Keratinocyte (primary cell): ENCODE measurements at regions of chr2 and their contacts with region 1.

Region 1: DNA sequence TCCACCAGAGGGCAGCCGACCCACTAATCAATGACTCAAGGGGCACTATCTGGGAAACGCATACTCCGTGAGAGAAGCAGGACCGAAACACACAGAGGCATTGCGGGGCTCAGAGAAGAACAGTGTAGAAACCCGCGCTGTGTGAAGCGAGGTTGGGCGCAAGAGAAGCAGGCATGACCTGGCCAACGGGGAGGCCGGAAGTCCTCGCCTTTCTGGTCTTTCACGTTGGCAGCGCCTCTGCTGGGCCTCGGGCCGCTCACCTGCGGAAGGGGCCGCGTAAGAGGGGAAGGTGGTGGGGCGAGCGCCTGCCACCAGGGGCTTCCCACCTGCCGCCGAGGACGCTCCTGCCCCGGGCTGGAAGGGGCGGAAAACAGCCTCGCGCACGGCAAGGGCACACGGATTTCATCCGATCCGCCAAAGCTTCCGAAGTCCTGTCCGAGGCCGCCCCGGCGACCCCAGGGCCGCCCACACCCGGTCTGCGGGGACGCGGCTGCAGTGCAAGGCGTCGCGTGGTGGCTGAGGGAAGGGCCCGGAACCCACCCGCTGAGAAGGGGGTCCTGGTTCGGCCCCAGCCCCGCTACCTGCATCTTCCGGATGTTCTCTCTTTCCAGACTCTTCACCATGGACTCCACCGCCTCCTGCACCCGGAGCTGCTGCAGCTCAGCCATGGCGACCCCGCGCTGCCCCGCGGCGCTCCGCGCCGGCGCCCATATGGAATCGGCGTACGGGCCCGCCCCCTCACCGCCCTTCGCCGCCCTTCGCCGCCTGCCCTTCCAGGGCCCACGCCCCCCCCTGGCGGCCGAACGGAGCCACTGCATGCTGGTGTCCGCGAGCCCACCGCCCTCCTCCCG is at the start of gene FAM136A:
- DNase-seq: no peak
- H3K4me3 ChIP-seq: peak within 1 kb of the TSS; percentile 82 to 91 (median 84)
- H3K27ac ChIP-seq: peak within 1 kb of the TSS; percentile 72
- H3K4me1 ChIP-seq: peaks cover 29% of the 10 kb centered on the region
- H3K27me3 ChIP-seq: no peaks in the 10 kb centered on the region
- CTCF ChIP-seq: peak; percentile 53 to 93 (median 90)
- polyA plus RNA-seq, gene FAM136A: 21.3 to 35.8 TPM (median 32.9 TPM) in 3 replicates

Region 2: DNA sequence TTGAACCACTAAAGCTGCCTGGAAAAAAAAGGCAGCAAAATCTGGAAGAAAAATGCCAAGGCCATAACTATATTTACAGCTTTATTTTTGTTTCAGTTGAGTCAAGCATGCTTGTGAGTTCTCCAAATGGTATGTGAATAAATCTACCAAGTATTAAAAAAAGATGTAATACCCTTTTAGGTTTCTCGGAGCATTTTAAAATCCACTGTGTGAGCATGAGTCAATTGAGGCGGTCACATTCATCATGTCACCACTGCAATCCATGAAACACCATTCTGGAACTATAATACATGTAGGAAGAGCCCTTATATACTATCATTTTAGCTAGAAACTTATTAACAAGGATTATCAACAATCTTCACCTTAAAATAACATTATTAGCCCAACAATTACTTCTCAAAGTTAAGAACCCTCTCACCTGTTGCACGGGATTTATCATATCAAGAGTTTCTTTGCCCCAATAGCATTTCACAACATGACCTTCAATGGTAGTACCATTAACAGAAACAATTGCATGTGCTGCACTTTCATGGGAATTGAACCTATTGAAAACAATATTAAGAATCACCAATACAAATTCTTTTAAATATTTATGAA is 86.5 kb before region 1 on chr2:
- dilution Hi-C with region 1: no loop called
- DNase-seq: no peak
- H3K4me3 ChIP-seq: no peak overlapping the region
- H3K27ac ChIP-seq: no peak overlapping the region
- H3K4me1 ChIP-seq: no peaks in the 10 kb centered on the region
- H3K27me3 ChIP-seq: no peaks in the 10 kb centered on the region
- CTCF ChIP-seq: no peak

Region 3: GRCh38 chr2:70647873-70648481 is 346.4 kb after region 1 on chr2:
- dilution Hi-C with region 1: loop called (anchors 25 kb)
- DNase-seq: peak; percentile 21
- H3K4me3 ChIP-seq: no peak overlapping the region
- H3K27ac ChIP-seq: no peak overlapping the region
- H3K4me1 ChIP-seq: no peaks in the 10 kb centered on the region
- H3K27me3 ChIP-seq: peaks cover 2% of the 10 kb centered on the region
- CTCF ChIP-seq: peak; percentile 100

Region 4: DNA sequence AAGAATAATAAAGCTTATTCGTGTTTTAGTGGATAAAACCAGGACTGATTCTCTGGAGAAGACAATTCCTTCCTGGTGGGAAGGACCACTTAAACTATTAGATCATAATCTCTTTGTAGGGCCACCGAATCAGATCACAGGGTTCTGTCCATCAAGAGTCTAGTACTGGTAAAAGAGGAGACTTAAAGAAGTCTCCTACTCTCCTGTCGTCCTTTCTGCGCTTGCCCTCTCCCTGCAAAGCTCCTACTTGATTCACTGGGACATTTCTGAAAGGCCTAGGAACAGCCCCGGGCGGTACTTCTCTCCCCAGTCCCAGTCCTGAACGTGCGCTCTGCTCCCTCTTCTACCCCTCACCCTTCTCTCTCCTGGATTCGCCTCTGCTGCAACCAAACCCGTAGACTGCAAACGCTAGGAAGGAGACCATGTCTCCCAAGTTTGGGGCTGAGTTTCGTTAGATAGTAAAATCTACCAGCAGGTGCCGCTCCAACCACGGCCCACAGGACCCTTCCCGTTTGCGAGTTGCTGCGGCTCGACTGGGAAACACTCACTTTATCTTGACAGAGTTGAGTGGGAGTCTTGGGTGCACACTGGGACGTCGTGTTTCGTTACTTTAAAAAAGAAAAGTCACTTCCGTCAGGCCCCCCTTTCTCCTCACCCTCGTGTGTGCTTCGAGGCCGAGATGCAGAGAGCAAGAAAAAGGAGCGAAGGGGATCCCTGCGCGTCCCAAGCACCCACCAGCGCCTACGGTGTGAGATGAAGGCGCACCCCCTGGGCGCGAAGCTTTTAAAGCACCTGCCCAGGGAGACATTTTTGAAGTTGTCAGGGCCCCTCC is 488.0 kb after region 1 on chr2:
- dilution Hi-C with region 1: loop called (anchors 25 kb)
- DNase-seq: no peak
- H3K4me3 ChIP-seq: peak overlapping the region in 1 of 3 experiments; percentile 40
- H3K27ac ChIP-seq: no peak overlapping the region
- H3K4me1 ChIP-seq: peaks cover 5% of the 10 kb centered on the region
- H3K27me3 ChIP-seq: peaks cover 50% of the 10 kb centered on the region
- CTCF ChIP-seq: peak; percentile 74 to 88 (median 77)